Mammary epithelial cell (primary cell): ENCODE measurements at regions of chr1 and their contacts with region 1.

Region 1: DNA sequence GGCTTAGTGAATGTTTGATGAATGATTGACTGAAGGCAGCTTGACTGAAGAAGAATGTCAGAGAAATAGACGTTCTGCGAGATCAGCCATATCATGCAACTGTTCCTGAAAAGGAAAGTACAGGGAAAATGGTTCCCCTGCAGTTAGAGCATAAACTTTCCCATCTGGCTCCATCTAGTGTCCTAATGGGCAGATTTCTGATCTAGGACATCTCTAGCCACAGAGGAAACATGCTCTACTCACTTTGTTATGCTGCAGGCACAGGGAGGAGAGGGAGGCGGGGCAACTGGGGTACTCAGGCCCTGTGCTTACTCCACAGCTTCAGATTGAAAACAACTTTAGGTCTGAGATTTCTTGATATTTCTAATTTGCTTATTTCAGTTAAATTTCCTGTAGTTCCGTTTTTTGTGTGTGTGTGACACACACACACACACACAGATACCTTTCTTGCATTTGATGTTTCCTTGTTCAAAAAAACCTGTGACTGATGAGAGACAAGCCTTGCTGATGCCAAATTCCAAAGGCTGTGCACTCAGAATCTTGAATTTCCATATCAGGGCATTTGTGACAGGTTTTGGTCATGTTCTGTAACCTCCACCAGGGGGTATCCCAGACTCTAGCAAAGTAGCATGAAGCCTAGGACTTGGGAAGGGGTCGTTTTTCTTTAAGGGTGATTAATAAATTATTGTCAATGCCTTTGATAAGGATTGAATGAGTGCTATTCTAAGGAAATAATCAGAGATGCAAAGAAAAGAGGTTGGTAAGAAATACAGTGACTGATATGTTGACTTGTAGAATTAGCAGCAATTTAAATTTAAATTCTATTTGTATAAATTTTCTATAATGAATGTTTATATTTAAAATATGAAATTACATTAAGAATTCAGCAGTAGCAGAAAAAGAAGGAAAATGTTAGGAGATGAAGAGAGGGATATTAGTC is 139.7 kb upstream of the BEND5 start:
- DNase-seq: peak; percentile 61
- H3K4me3 ChIP-seq: no peak overlapping the region
- H3K27ac ChIP-seq: no peak overlapping the region
- H3K4me1 ChIP-seq: no peaks in the 10 kb centered on the region
- H3K27me3 ChIP-seq: no peaks in the 10 kb centered on the region
- CTCF ChIP-seq: peak; percentile 63 to 69

Region 2: GRCh38 chr1:48552420-48552819 is 364.0 kb before region 1 on chr1:
- CTCF ChIA-PET with region 1: no interaction called
- dilution Hi-C with region 1: no loop called
- in situ Hi-C with region 1: loop called in 1 of 2 experiments (anchors 25 kb)
- intact Hi-C with region 1: loop called (anchors 2 kb)
- DNase-seq: peak; percentile 37
- H3K4me3 ChIP-seq: no peak overlapping the region
- H3K27ac ChIP-seq: no peak overlapping the region
- H3K4me1 ChIP-seq: peaks cover 21% of the 10 kb centered on the region
- H3K27me3 ChIP-seq: no peaks in the 10 kb centered on the region
- CTCF ChIP-seq: peak; percentile 45 to 70

Region 3: GRCh38 chr1:48677306-48678287 is 238.8 kb before region 1 on chr1:
- CTCF ChIA-PET with region 1: interaction called, 4 read pairs
- dilution Hi-C with region 1: no loop called
- in situ Hi-C with region 1: no loop called
- intact Hi-C with region 1: loop called (anchors 5 kb)
- DNase-seq: peak; percentile 49
- H3K4me3 ChIP-seq: no peak overlapping the region
- H3K27ac ChIP-seq: no peak overlapping the region
- H3K4me1 ChIP-seq: peaks cover 11% of the 10 kb centered on the region
- H3K27me3 ChIP-seq: no peaks in the 10 kb centered on the region
- CTCF ChIP-seq: peak; percentile 59 to 74

Region 4: DNA sequence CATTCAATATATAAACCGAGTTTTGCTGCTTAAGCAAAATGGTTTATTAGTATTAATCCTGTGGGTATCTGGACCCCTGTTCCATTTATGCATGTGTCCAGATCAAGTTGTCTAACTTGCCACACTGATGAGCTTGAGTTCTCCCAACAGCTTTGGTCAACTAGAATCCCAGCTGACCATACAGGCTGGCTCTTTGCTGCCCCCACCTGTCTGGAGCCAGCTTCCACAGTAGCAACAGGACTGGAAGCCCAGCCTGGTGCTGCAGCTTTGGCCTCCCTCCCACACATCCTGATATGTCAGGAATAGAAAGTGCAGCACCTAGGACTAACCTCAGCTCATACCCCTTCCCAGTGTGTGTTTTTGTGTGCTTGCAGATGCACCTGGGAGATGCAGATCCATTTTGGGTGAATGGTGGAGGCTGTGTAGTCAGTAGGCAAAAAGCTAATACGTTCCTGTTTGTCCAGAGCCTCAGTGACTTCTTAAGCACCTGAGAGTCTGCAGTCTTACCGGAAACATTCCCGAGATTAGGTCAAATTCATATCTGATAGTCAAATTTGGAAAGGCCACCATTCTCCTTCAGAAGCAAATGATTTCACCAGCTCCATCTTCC is 98.8 kb before region 1 on chr1:
- CTCF ChIA-PET with region 1: no interaction called
- dilution Hi-C with region 1: no loop called
- in situ Hi-C with region 1: no loop called
- intact Hi-C with region 1: loop called (anchors 2 kb)
- DNase-seq: peak; percentile 47
- H3K4me3 ChIP-seq: no peak overlapping the region
- H3K27ac ChIP-seq: no peak overlapping the region
- H3K4me1 ChIP-seq: no peaks in the 10 kb centered on the region
- H3K27me3 ChIP-seq: no peaks in the 10 kb centered on the region
- CTCF ChIP-seq: peak; percentile 94 to 97

Region 5: DNA sequence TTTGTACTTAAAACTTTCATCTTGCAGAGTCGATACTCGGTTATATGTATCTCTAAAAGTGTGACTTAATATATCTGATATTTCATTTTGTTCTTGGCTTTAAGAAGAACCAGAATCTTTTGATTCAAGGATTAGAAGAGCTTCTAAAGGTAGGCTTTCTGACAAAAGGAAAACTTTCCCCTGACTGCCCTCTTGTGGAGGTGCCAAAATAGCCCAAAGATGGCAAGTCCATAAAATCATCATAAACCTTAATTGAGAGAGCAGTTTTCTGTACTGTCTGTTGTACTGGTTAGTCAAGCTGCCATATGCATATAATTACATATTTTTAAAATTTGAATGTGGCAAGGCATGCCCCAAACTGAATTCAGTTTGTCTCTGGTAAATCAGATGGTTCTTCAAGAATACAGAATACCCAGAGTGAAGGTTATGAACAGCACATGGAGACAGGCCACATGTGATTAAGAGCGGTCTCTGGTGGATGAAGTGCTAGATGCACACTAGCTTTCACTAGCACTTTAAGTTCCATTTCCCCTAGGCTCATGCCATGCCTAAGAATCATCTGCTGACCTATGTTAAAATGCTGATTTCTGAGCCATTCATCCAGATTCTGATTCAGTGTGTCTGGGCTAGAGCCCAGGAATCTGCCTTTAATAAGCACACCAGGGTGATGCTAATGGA is 1164.6 kb after region 1 on chr1:
- CTCF ChIA-PET with region 1: no interaction called
- dilution Hi-C with region 1: no loop called
- in situ Hi-C with region 1: no loop called
- intact Hi-C with region 1: loop called (anchors 5 kb)
- DNase-seq: peak; percentile 8
- H3K4me3 ChIP-seq: no peak overlapping the region
- H3K27ac ChIP-seq: no peak overlapping the region
- H3K4me1 ChIP-seq: no peaks in the 10 kb centered on the region
- H3K27me3 ChIP-seq: no peaks in the 10 kb centered on the region
- CTCF ChIP-seq: peak in 1 of 2 donors; percentile 56

Region 6: GRCh38 chr1:50348449-50349241 is 1432.2 kb after region 1 on chr1:
- CTCF ChIA-PET with region 1: no interaction called
- dilution Hi-C with region 1: no loop called
- in situ Hi-C with region 1: no loop called
- intact Hi-C with region 1: loop called (anchors 2 kb)
- DNase-seq: peak; percentile 59
- H3K4me3 ChIP-seq: no peak overlapping the region
- H3K27ac ChIP-seq: no peak overlapping the region
- H3K4me1 ChIP-seq: no peaks in the 10 kb centered on the region
- H3K27me3 ChIP-seq: no peaks in the 10 kb centered on the region
- CTCF ChIP-seq: peak; percentile 81 to 83